Sigmoid colon (tissue), 7 donors: ENCODE measurements at regions of chr9 and their contacts with region 1.

Region 1: DNA sequence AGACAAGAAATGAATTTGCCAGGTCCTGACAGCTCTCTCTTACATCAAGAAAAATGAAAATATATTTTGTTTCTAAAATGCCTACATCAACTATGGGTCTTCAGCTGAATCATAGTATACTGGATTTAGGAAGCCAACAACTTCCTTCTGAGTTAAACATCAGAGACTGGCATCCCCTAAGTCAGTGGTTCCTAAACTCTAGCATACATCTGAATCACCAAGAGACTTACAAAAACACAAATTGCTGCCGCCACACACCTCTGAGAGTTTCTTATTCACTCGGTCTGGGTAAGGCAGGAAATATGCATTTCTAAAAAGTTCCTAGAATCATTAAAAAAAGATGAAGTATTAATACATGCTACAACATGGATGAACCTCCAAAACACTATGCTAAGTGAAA is 60.4 kb upstream of the TMEM252 start:
- DNase-seq: no peak
- H3K4me3 ChIP-seq: no peak overlapping the region
- H3K27ac ChIP-seq: no peak overlapping the region
- H3K4me1 ChIP-seq: no peaks in the 10 kb centered on the region
- H3K27me3 ChIP-seq: no peaks in the 10 kb centered on the region
- CTCF ChIP-seq: no peak
- EP300 ChIP-seq: no peak
- POLR2A ChIP-seq: no peak

Region 2: DNA sequence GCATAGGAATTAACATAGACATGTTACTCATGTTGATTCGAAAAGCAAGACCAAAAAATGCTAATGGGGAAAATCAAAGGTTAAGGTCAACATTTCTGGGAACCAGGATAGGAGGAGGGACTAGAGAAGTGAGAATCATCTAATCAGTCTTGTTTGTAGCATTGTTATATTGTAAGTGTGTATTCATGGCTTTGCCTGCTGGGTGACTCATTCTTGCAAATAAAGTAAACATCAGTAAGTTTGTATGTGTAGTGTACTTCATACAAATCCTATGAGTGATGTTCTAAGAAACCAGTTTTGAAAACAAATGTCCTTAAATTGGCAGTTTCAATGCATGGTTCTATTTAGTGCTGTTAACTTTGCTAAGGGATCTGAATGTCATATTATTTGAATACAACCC is 18.6 kb after region 1 on chr9:
- intact Hi-C with region 1: no loop called
- DNase-seq: no peak
- H3K4me3 ChIP-seq: no peak overlapping the region
- H3K27ac ChIP-seq: no peak overlapping the region
- H3K4me1 ChIP-seq: no peaks in the 10 kb centered on the region
- H3K27me3 ChIP-seq: no peaks in the 10 kb centered on the region
- CTCF ChIP-seq: no peak
- EP300 ChIP-seq: no peak
- POLR2A ChIP-seq: no peak

Region 3: GRCh38 chr9:69019808-69020207 is 418.7 kb after region 1 on chr9:
- intact Hi-C with region 1: loop called (anchors 5 kb)
- DNase-seq: no peak
- H3K4me3 ChIP-seq: no peak overlapping the region
- H3K27ac ChIP-seq: no peak overlapping the region
- H3K4me1 ChIP-seq: peaks cover 0 to 10% (median 0%) of the 10 kb centered on the region in 4 donors
- H3K27me3 ChIP-seq: no peaks in the 10 kb centered on the region
- CTCF ChIP-seq: no peak
- EP300 ChIP-seq: no peak
- POLR2A ChIP-seq: no peak